ENCODE measurements at regions of chr6 and their contacts with region 1.

Region 1: DNA sequence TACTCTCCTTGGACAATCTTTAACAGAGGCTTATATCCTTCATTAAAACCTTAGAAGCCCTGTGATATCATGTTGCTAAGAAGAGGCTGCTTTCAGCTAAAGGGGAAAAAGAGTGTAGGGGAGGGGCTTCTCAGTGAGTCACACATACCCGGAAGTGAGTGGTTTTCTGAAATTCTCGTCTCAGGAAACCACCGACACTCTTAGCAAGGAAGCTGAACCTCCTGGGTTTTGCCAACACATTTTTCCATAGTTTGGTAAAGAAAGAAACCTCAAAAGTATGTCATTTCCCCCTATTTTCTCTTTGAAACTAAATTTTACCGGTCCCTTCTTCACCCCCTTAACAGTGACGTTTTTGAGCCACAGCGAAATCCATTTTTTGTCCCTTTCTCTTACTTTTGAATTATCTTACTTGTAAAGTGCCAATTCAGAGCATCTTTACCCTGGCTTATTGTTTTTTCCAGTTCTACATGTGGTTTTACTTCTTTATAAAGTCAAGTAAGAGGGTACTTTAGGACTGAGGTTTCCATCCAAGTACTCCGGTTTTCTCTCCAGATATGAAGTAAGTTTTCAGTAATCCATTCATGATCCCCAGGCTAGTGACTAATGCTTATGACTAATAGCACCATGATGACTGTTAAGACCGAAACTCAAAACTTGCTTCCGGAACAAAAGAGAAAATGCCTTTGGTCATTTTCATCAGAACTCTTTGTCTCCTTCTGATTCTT is 219.3 kb downstream of the ARHGAP18 start:
- DNase-seq: peak; percentile 57 to 92
- H3K4me3 ChIP-seq: peak overlapping the region; percentile 33; the same call in 1 of the 2 replicates
- H3K27ac ChIP-seq: peak overlapping the region; percentile 98
- H3K4me1 ChIP-seq: peaks cover 35% of the 10 kb centered on the region
- H3K27me3 ChIP-seq: no peaks in the 10 kb centered on the region
- CTCF ChIP-seq: no peak

Region 2: GRCh38 chr6:128738112-128738511 is 752.6 kb before region 1 on chr6:
- CTCF ChIA-PET with region 1: no interaction called
- POLR2A ChIA-PET with region 1: interaction called, 9 read pairs
- intact Hi-C with region 1: loop called (anchors 5 kb)
- DNase-seq: no peak
- H3K4me3 ChIP-seq: no peak overlapping the region
- H3K27ac ChIP-seq: peak overlapping the region; percentile 7; the same call in 1 of the 2 replicates
- H3K4me1 ChIP-seq: peaks cover 20% of the 10 kb centered on the region; the same call in 1 of the 2 replicates
- H3K27me3 ChIP-seq: no peaks in the 10 kb centered on the region
- CTCF ChIP-seq: no peak

Region 3: GRCh38 chr6:129317931-129318820 is 172.5 kb before region 1 on chr6:
- CTCF ChIA-PET with region 1: no interaction called
- POLR2A ChIA-PET with region 1: interaction called, 9 read pairs
- intact Hi-C with region 1: loop called (anchors 1 kb)
- DNase-seq: peak; percentile 66 to 100
- H3K4me3 ChIP-seq: peak overlapping the region; percentile 19
- H3K27ac ChIP-seq: peak overlapping the region; percentile 92
- H3K4me1 ChIP-seq: peaks cover 39% of the 10 kb centered on the region
- H3K27me3 ChIP-seq: no peaks in the 10 kb centered on the region
- CTCF ChIP-seq: 0 out of 2 replicates have a peak, but pooled peaks have one; percentile 18

Region 4: GRCh38 chr6:129385117-129385516 is 105.6 kb before region 1 on chr6:
- CTCF ChIA-PET with region 1: no interaction called
- POLR2A ChIA-PET with region 1: no interaction called
- intact Hi-C with region 1: no loop called
- DNase-seq: no peak
- H3K4me3 ChIP-seq: no peak overlapping the region
- H3K27ac ChIP-seq: no peak overlapping the region
- H3K4me1 ChIP-seq: no peaks in the 10 kb centered on the region
- H3K27me3 ChIP-seq: no peaks in the 10 kb centered on the region
- CTCF ChIP-seq: no peak

Region 5: GRCh38 chr6:129402244-129402643 is 88.4 kb before region 1 on chr6:
- CTCF ChIA-PET with region 1: no interaction called
- POLR2A ChIA-PET with region 1: interaction called, 17 read pairs
- intact Hi-C with region 1: no loop called
- DNase-seq: no peak
- H3K4me3 ChIP-seq: no peak overlapping the region
- H3K27ac ChIP-seq: no peak overlapping the region
- H3K4me1 ChIP-seq: no peaks in the 10 kb centered on the region
- H3K27me3 ChIP-seq: no peaks in the 10 kb centered on the region
- CTCF ChIP-seq: no peak

Region 6: GRCh38 chr6:129617986-129618385 is 127.3 kb after region 1 on chr6:
- CTCF ChIA-PET with region 1: no interaction called
- POLR2A ChIA-PET with region 1: no interaction called
- intact Hi-C with region 1: no loop called
- DNase-seq: no peak
- H3K4me3 ChIP-seq: no peak overlapping the region
- H3K27ac ChIP-seq: no peak overlapping the region
- H3K4me1 ChIP-seq: no peaks in the 10 kb centered on the region
- H3K27me3 ChIP-seq: no peaks in the 10 kb centered on the region
- CTCF ChIP-seq: no peak

Region 7: DNA sequence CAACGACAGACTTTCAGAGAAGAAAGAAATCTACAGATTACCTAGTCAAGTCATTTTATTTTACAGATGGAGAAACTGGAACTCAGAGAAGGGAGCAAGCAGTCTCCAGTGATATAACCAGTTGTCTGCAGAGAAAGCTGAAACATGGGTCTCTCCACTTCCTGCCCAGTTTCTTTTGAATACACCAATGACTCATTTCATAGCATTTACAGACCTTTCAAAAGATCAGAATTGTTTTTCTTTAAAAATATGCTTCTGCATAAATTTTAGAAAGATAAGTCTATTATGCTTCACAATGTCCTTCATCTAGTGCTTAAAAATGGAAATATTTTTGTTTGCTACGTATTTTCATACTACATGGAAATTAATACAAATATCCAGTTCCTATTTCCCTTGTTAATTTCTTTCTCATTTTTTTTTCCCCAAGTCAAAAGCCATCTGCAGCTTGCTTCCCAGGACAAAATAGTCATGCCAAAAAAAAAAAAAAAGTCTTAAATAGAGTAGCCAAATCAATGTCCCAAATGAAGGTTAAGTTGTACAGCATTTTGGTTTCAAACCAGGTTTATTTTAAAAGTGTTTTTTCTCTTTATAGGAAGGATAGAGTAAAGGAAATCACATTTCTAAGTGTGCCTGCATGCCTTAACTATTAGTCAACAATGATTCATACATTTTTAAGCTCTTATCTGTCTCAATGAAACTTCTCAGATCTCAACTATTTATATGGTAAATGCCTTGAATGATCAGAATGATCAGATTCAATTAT is 182.4 kb after region 1 on chr6:
- CTCF ChIA-PET with region 1: no interaction called
- POLR2A ChIA-PET with region 1: no interaction called
- intact Hi-C with region 1: loop called (anchors 5 kb)
- DNase-seq: peak; percentile 16 to 85
- H3K4me3 ChIP-seq: peak overlapping the region; percentile 22; the same call in 1 of the 2 replicates
- H3K27ac ChIP-seq: peak overlapping the region; percentile 89
- H3K4me1 ChIP-seq: peaks cover 28% of the 10 kb centered on the region
- H3K27me3 ChIP-seq: no peaks in the 10 kb centered on the region
- CTCF ChIP-seq: no peak